GM23248 (cell line): ENCODE measurements at regions of chr4 and their contacts with region 1.

Region 1: DNA sequence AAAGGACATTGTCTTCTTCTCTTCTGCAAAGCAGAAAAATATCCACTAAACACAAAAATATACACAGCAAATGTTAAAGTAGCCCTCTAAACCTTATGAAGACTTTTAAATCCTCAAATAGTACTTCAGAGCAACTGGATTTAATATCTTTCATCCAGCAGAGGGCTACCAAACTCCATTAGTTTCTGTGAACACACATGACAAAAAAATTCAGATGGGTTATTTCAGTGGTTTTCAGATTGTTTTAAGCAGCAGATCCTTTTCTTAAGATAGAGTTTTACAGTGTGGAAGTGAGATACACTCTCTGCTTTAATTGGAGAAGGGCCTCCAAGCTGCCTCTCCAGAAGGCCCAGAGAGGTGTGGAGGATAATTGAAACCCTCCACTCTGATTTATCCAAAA is 56.7 kb downstream of the ANK2 start:
- DNase-seq: peak; percentile 77
- H3K4me3 ChIP-seq: no peak overlapping the region
- H3K27ac ChIP-seq: no peak overlapping the region
- H3K4me1 ChIP-seq: peaks cover 10% of the 10 kb centered on the region
- H3K27me3 ChIP-seq: no peaks in the 10 kb centered on the region

Region 2: DNA sequence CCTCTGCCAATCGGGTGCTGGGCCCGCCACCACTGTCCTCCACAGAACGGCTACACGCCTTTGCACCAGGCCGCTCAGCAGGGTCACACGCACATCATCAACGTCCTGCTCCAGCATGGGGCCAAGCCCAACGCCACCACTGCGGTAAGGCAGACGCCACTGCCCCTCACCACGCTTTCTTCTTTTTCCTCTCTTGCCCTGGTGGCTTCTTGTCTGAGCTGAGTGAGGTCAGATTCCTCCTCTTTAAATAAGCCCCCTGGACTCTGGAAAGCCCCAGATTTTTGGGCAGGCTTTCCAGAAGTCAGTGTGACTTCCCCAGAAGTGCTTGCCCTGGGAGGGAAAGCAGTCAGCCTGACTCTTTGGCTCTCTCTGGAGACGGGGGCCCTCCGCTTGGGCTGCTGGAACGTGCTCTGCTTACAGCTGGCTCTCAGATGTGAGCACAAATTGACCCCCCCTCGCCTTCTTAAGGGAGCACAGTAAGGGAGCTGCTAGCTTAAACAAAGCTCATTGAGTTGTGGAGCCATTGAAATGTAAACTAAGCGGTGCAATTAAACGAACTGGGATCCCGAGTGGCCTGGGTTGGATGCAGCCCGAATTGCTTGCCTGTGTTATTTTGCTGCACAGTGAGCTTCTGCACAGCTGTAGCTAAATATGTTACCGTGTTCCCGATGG is 186.4 kb after region 1 on chr4:
- in situ Hi-C with region 1: loop called (anchors 10 kb)
- DNase-seq: peak; percentile 53
- H3K4me3 ChIP-seq: peak overlapping the region; percentile 64
- H3K27ac ChIP-seq: peak overlapping the region; percentile 75
- H3K4me1 ChIP-seq: peaks cover 32% of the 10 kb centered on the region
- H3K27me3 ChIP-seq: no peaks in the 10 kb centered on the region

Region 3: DNA sequence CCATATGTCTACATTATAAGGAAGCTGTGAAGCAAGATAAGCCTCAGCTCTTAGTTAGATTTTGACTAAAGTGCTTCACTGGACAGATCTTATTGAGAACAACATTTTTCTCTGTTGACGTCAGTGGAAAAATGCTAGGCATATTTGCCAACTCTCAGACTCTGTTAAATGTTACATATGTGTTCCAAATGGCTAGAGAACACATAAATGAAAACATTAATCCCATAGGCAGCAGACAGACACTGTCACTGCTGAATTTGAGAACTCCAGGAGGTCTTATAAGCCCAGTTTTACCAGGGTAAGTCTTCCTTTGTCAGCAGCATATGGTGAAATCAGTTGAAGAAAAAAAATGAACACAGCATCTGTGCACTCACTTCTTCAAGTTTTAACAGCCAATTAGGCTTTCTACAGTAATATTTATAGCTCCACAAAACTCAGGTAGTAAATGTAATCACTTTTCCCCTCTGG is 468.6 kb after region 1 on chr4:
- in situ Hi-C with region 1: no loop called
- DNase-seq: peak; percentile 70
- H3K4me3 ChIP-seq: no peak overlapping the region
- H3K27ac ChIP-seq: peak overlapping the region; percentile 33
- H3K4me1 ChIP-seq: peaks cover 38% of the 10 kb centered on the region
- H3K27me3 ChIP-seq: no peaks in the 10 kb centered on the region